ENCODE measurements at regions of chr9 and their contacts with region 1.

Region 1: GRCh38 chr9:20558566-20559016 is 63.7 kb downstream of the MLLT3 start:
- DNase-seq: no peak
- ATAC-seq: no peak
- H3K4me3 ChIP-seq: no peak overlapping the region
- H3K27ac ChIP-seq: no peak overlapping the region
- H3K4me1 ChIP-seq: peaks cover 6% of the 10 kb centered on the region
- H3K27me3 ChIP-seq: no peaks in the 10 kb centered on the region
- CTCF ChIP-seq: no peak
- EP300 ChIP-seq: no peak
- POLR2A ChIP-seq: no peak
- RAD21 ChIP-seq: no peak

Region 2: GRCh38 chr9:20604562-20604961 is 46.0 kb after region 1 on chr9:
- CTCF ChIA-PET with region 1: no interaction called
- POLR2A ChIA-PET with region 1: no interaction called
- in situ Hi-C with region 1: loop called (anchors 10 kb)
- intact Hi-C with region 1: no loop called
- DNase-seq: no peak
- ATAC-seq: no peak
- H3K4me3 ChIP-seq: no peak overlapping the region
- H3K27ac ChIP-seq: no peak overlapping the region
- H3K4me1 ChIP-seq: no peaks in the 10 kb centered on the region
- H3K27me3 ChIP-seq: no peaks in the 10 kb centered on the region; a peak in 1 of 5 replicates
- CTCF ChIP-seq: no peak
- EP300 ChIP-seq: no peak
- POLR2A ChIP-seq: no peak
- RAD21 ChIP-seq: no peak

Measured in HepG2 (cell line).